Caco-2 (cell line): ENCODE measurements at regions of chr10 and their contacts with region 1.

Region 1: GRCh38 chr10:89793649-89794254 is 92.4 kb downstream of the KIF20B start:
- DNase-seq: peak in 1 of 2 experiments; percentile 70
- H3K4me3 ChIP-seq: no peak overlapping the region
- H3K4me3 Mint-ChIP-seq: no peak overlapping the region
- H3K27ac Mint-ChIP-seq: no peak overlapping the region
- H3K4me1 ChIP-seq: no peaks in the 10 kb centered on the region
- H3K4me1 Mint-ChIP-seq: no peaks in the 10 kb centered on the region
- H3K27me3 ChIP-seq: no peaks in the 10 kb centered on the region
- H3K27me3 Mint-ChIP-seq: no peaks in the 10 kb centered on the region
- CTCF ChIP-seq: peak; percentile 82 to 87

Region 2: GRCh38 chr10:89283936-89284475 is 509.7 kb before region 1 on chr10:
- CTCF ChIA-PET with region 1: no interaction called
- POLR2A ChIA-PET with region 1: no interaction called
- intact Hi-C with region 1: no loop called
- DNase-seq: no peak
- H3K4me3 ChIP-seq: no peak overlapping the region
- H3K4me3 Mint-ChIP-seq: no peak overlapping the region
- H3K27ac Mint-ChIP-seq: no peak overlapping the region
- H3K4me1 ChIP-seq: no peaks in the 10 kb centered on the region
- H3K4me1 Mint-ChIP-seq: no peaks in the 10 kb centered on the region
- H3K27me3 ChIP-seq: no peaks in the 10 kb centered on the region
- H3K27me3 Mint-ChIP-seq: no peaks in the 10 kb centered on the region
- CTCF ChIP-seq: no peak

Region 3: DNA sequence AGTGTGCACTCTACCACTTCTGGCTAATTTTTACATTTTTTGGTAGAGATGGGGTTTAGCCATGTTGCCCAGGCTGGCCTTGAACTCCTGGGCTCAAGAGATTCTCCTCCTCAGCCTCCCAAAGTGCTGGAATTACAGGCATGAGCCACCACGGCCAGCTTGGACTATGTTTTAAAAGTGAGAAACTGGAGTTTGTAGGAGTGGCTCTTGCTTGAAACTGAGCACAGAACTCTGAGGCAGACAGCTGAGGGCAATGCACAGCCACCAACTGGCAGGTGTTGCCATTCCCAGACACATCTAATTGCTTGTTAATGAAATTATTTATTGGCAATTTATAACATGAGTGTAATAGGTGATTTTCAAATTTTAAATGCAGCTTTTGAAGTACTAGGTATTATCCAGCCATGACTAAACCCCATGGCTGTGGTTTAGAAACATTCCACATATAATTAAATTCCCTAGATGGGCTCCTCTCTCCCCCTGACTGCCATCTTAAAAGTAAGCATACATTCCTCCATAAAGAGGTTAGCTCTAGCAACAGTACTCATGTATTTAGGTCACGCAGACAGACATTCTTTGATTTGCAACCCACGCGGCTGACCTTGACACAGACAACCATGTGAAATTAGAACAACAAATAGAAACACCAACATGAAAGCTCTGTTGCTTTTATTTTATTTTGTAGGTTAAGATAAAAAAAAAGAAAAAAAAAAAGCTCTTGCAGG is 168.5 kb before region 1 on chr10:
- CTCF ChIA-PET with region 1: no interaction called
- POLR2A ChIA-PET with region 1: no interaction called
- intact Hi-C with region 1: no loop called
- DNase-seq: no peak
- H3K4me3 ChIP-seq: no peak overlapping the region
- H3K4me3 Mint-ChIP-seq: no peak overlapping the region
- H3K27ac Mint-ChIP-seq: no peak overlapping the region
- H3K4me1 ChIP-seq: no peaks in the 10 kb centered on the region
- H3K4me1 Mint-ChIP-seq: no peaks in the 10 kb centered on the region
- H3K27me3 ChIP-seq: no peaks in the 10 kb centered on the region; the same call in 1 of the 2 replicates
- H3K27me3 Mint-ChIP-seq: no peaks in the 10 kb centered on the region
- CTCF ChIP-seq: no peak

Region 4: GRCh38 chr10:89829887-89830269 is 36.1 kb after region 1 on chr10:
- CTCF ChIA-PET with region 1: no interaction called
- POLR2A ChIA-PET with region 1: no interaction called
- intact Hi-C with region 1: no loop called
- DNase-seq: no peak
- H3K4me3 ChIP-seq: no peak overlapping the region
- H3K4me3 Mint-ChIP-seq: no peak overlapping the region
- H3K27ac Mint-ChIP-seq: no peak overlapping the region
- H3K4me1 ChIP-seq: no peaks in the 10 kb centered on the region
- H3K4me1 Mint-ChIP-seq: no peaks in the 10 kb centered on the region
- H3K27me3 ChIP-seq: no peaks in the 10 kb centered on the region
- H3K27me3 Mint-ChIP-seq: no peaks in the 10 kb centered on the region
- CTCF ChIP-seq: no peak

Region 5: GRCh38 chr10:89853781-89854191 is 60.0 kb after region 1 on chr10:
- CTCF ChIA-PET with region 1: no interaction called
- POLR2A ChIA-PET with region 1: no interaction called
- intact Hi-C with region 1: loop called (anchors 1 kb)
- DNase-seq: no peak
- H3K4me3 ChIP-seq: no peak overlapping the region
- H3K4me3 Mint-ChIP-seq: no peak overlapping the region
- H3K27ac Mint-ChIP-seq: no peak overlapping the region
- H3K4me1 ChIP-seq: no peaks in the 10 kb centered on the region
- H3K4me1 Mint-ChIP-seq: no peaks in the 10 kb centered on the region
- H3K27me3 ChIP-seq: no peaks in the 10 kb centered on the region; the same call in 1 of the 2 replicates
- H3K27me3 Mint-ChIP-seq: no peaks in the 10 kb centered on the region
- CTCF ChIP-seq: peak in 1 of 2 experiments; percentile 21

Region 6: GRCh38 chr10:90087197-90088007 is 293.6 kb after region 1 on chr10:
- CTCF ChIA-PET with region 1: no interaction called
- POLR2A ChIA-PET with region 1: no interaction called
- intact Hi-C with region 1: loop called (anchors 1 kb)
- DNase-seq: no peak
- H3K4me3 ChIP-seq: no peak overlapping the region
- H3K4me3 Mint-ChIP-seq: no peak overlapping the region
- H3K27ac Mint-ChIP-seq: no peak overlapping the region
- H3K4me1 ChIP-seq: no peaks in the 10 kb centered on the region
- H3K4me1 Mint-ChIP-seq: no peaks in the 10 kb centered on the region
- H3K27me3 ChIP-seq: no peaks in the 10 kb centered on the region
- H3K27me3 Mint-ChIP-seq: peaks cover 9% of the 10 kb centered on the region
- CTCF ChIP-seq: no peak

Region 7: GRCh38 chr10:90579602-90580242 is 786.0 kb after region 1 on chr10:
- CTCF ChIA-PET with region 1: no interaction called
- POLR2A ChIA-PET with region 1: no interaction called
- intact Hi-C with region 1: loop called (anchors 1 kb)
- DNase-seq: peak; percentile 31 to 38
- H3K4me3 ChIP-seq: no peak overlapping the region
- H3K4me3 Mint-ChIP-seq: no peak overlapping the region
- H3K27ac Mint-ChIP-seq: no peak overlapping the region
- H3K4me1 ChIP-seq: no peaks in the 10 kb centered on the region
- H3K4me1 Mint-ChIP-seq: no peaks in the 10 kb centered on the region
- H3K27me3 ChIP-seq: no peaks in the 10 kb centered on the region
- H3K27me3 Mint-ChIP-seq: peaks cover 3% of the 10 kb centered on the region
- CTCF ChIP-seq: peak in 1 of 2 experiments; percentile 11

Region 8: GRCh38 chr10:90751107-90751997 is 957.6 kb after region 1 on chr10:
- CTCF ChIA-PET with region 1: no interaction called
- POLR2A ChIA-PET with region 1: no interaction called
- intact Hi-C with region 1: loop called (anchors 2 kb)
- DNase-seq: peak; percentile 52 to 70
- H3K4me3 ChIP-seq: no peak overlapping the region
- H3K4me3 Mint-ChIP-seq: no peak overlapping the region
- H3K27ac Mint-ChIP-seq: no peak overlapping the region
- H3K4me1 ChIP-seq: no peaks in the 10 kb centered on the region
- H3K4me1 Mint-ChIP-seq: no peaks in the 10 kb centered on the region
- H3K27me3 ChIP-seq: no peaks in the 10 kb centered on the region
- H3K27me3 Mint-ChIP-seq: peaks cover 10% of the 10 kb centered on the region
- CTCF ChIP-seq: peak; percentile 80 to 82